ENCODE measurements at regions of chr14 and their contacts with region 1.

Region 1: DNA sequence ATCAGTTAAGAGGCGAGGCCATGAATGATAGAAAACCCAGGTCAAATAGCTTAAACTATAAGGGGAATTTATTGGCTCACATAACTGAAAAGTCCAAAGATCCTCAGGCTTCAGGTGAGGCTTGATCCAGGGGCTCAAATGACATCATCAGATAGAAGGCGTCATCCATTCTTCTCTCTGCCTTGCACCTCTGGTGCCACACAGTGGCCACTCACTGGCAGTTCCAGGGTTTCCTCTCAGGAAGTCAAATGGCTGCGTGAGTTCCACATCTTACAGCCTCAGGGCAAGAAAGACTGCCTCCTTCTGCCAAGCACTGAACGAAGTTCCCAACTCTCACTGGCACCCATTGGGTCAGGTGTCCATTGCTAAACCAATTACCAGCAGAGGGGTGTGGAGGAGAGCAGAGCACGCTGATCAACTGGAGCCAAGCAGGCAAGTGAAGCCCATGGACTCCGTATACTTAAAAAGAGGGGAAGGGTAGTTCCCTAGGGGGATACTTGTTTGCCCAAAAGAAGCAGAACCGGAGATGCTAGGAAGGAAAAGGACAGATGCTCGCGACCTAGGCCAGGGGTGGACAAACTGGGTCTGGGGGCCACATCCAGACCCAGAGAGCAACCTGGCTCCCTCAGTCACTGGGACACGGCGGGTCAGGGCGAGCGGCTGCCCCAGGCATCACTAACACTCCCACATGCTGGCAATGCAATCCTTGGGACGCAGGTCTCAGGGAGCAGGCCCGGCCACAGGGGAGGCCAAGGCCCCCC is 69.3 kb downstream of the SERPINA3 start:
- DNase-seq: peak; percentile 78
- ATAC-seq: peak; percentile 78
- H3K4me3 ChIP-seq: no peak overlapping the region; a peak in 1 of 6 replicates
- H3K27ac ChIP-seq: peak overlapping the region; percentile 80
- H3K4me1 ChIP-seq: peaks cover 66% of the 10 kb centered on the region
- H3K27me3 ChIP-seq: peaks cover 5 to 9% of the 10 kb centered on the region in 2 experiments; a peak in 3 of 5 replicates
- CTCF ChIP-seq: peak; percentile 95
- EP300 ChIP-seq: 0 out of 4 replicates have a peak, but pooled peaks of 1 of the 2 experiments have one; percentile 40
- POLR2A ChIP-seq: no peak
- RAD21 ChIP-seq: peak; percentile 90

Region 2: DNA sequence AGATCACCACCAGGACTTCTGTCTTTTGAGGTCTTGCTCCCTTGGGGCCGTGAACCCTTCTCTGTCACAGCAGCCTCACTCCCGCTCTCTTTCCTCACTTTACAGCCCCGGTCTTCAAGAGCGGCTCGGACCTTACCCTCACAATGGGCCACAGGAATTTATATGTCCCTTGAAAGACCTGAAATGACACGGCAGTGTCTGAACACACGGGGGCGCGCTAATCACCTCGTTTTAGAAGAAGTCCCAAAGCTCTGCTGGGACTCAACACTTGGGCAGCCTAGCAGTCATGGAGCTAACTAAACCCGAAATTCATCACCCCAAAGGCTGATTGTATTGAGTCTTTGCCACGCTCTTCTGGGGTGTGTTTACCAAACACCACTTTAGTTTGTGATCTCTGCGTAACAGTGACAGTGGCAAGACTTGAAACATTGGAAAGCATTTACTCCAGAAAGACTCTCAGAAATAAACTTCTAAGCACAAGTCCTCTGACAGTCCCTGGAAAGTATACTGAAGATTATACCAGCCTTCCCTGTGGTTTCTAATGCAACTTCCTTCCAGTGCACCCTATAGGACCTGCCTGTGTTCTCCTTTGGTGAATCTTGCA is 257.9 kb before region 1 on chr14:
- CTCF ChIA-PET with region 1: interaction called, 6 read pairs
- POLR2A ChIA-PET with region 1: no interaction called
- in situ Hi-C with region 1: loop called (anchors 10 kb)
- intact Hi-C with region 1: loop called (anchors 5 kb)
- DNase-seq: peak; percentile 80
- ATAC-seq: peak; percentile 91
- H3K4me3 ChIP-seq: 0 out of 6 replicates have a peak overlapping the region, but pooled peaks of 1 of the 3 experiments have one; percentile 38
- H3K27ac ChIP-seq: no peak overlapping the region
- H3K4me1 ChIP-seq: peaks cover 32% of the 10 kb centered on the region
- H3K27me3 ChIP-seq: no peaks in the 10 kb centered on the region
- CTCF ChIP-seq: peak; percentile 90
- EP300 ChIP-seq: no peak
- POLR2A ChIP-seq: no peak
- RAD21 ChIP-seq: peak; percentile 76

Region 3: GRCh38 chr14:94581127-94581999 is 100.1 kb before region 1 on chr14 and contains the start of gene SERPINA5:
- CTCF ChIA-PET with region 1: no interaction called
- POLR2A ChIA-PET with region 1: no interaction called
- in situ Hi-C with region 1: no loop called
- intact Hi-C with region 1: no loop called
- DNase-seq: peak; percentile 83
- ATAC-seq: peak; percentile 95
- H3K4me3 ChIP-seq: peak within 1 kb of the TSS; percentile 61 to 88 (median 75)
- H3K27ac ChIP-seq: peak within 1 kb of the TSS; percentile 88
- H3K4me1 ChIP-seq: peaks cover 75% of the 10 kb centered on the region
- H3K27me3 ChIP-seq: no peaks in the 10 kb centered on the region; a peak in 1 of 5 replicates
- CTCF ChIP-seq: peak; percentile 54
- EP300 ChIP-seq: peak in 1 of 2 experiments; percentile 46; a peak in 2 of 4 replicates
- POLR2A ChIP-seq: peak; percentile 83 to 92
- RAD21 ChIP-seq: peak; percentile 37; the same call in 1 of the 2 replicates
- total RNA-seq, gene SERPINA5: 237 and 498 TPM in 2 replicates

Region 4: GRCh38 chr14:94622653-94623421 is 58.6 kb before region 1 on chr14:
- CTCF ChIA-PET with region 1: no interaction called
- POLR2A ChIA-PET with region 1: interaction called, 3 read pairs
- in situ Hi-C with region 1: loop called (anchors 5 kb)
- intact Hi-C with region 1: loop called (anchors 5 kb)
- DNase-seq: no peak
- ATAC-seq: no peak
- H3K4me3 ChIP-seq: no peak overlapping the region
- H3K27ac ChIP-seq: no peak overlapping the region
- H3K4me1 ChIP-seq: peaks cover 44% of the 10 kb centered on the region
- H3K27me3 ChIP-seq: no peaks in the 10 kb centered on the region
- CTCF ChIP-seq: no peak
- EP300 ChIP-seq: no peak
- POLR2A ChIP-seq: no peak; a peak in 1 of 4 replicates
- RAD21 ChIP-seq: no peak

Region 5: DNA sequence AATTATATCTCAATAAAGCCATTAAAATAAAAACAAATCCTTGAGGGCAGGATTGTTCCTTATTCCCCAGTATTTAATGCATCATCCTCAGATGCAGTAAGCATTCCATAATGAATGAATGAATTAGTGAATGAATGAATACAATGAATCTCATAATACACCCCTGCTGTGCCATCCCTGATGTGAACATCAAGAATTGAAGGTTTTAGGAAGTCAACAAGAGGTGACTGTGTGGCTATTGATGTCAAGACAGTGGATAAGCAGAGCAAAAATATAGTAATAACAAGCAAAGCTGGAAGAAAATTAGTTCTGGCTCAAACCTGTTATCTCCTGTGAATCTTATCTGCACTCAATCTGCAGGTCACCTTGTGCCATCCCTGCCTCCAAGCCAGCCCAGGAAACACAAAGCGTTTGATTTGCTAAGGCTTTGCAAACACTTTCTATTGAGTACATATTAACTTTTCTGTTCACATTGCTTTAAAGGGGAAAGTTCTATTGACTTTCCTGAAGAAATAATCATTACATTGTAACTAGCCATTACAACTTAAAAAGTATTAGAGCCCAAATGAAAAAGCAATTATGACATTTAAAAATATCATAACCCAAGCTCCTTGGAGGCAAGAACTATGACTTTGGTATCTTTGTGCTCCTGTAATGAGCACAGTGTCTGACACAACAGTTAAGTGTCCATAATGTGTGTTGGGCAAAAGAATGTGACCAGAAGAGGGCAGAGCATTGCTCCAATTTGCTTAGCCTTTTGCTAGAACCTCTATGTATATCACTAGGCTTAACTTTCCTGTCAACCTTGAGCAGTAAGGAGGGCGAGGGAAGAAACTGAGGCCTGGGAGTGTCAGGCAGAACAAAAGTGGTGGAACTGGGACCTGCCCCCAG is 44.7 kb before region 1 on chr14:
- CTCF ChIA-PET with region 1: no interaction called
- POLR2A ChIA-PET with region 1: no interaction called
- in situ Hi-C with region 1: no loop called
- intact Hi-C with region 1: loop called (anchors 2 kb)
- DNase-seq: peak; percentile 80
- ATAC-seq: peak; percentile 74
- H3K4me3 ChIP-seq: peak overlapping the region in 1 of 3 experiments; percentile 39; a peak in 1 of 6 replicates
- H3K27ac ChIP-seq: peak overlapping the region; percentile 52
- H3K4me1 ChIP-seq: peaks cover 92% of the 10 kb centered on the region
- H3K27me3 ChIP-seq: no peaks in the 10 kb centered on the region
- CTCF ChIP-seq: peak; percentile 84
- EP300 ChIP-seq: peak in 1 of 2 experiments; percentile 94; a peak in 2 of 4 replicates
- POLR2A ChIP-seq: no peak
- RAD21 ChIP-seq: no peak; the same call in none of the 2 replicates

Region 6: GRCh38 chr14:94654071-94654861 is 27.2 kb before region 1 on chr14:
- CTCF ChIA-PET with region 1: no interaction called
- POLR2A ChIA-PET with region 1: no interaction called
- in situ Hi-C with region 1: no loop called
- intact Hi-C with region 1: loop called (anchors 2 kb)
- DNase-seq: peak; percentile 74
- ATAC-seq: peak; percentile 86
- H3K4me3 ChIP-seq: peak overlapping the region in 1 of 3 experiments; percentile 41; a peak in 2 of 6 replicates
- H3K27ac ChIP-seq: no peak overlapping the region
- H3K4me1 ChIP-seq: peaks cover 52% of the 10 kb centered on the region
- H3K27me3 ChIP-seq: peaks cover 0 to 2% of the 10 kb centered on the region in 2 experiments; a peak in 1 of 5 replicates
- CTCF ChIP-seq: no peak
- EP300 ChIP-seq: no peak
- POLR2A ChIP-seq: no peak
- RAD21 ChIP-seq: no peak